Gastrocnemius medialis (tissue), 4 donors: ENCODE measurements at regions of chr1 and their contacts with region 1.

Region 1: GRCh38 chr1:13646521-13646920 is 53.5 kb upstream of the PRDM2 start:
- DNase-seq: no peak
- ATAC-seq: no peak
- H3K4me3 ChIP-seq: no peak overlapping the region
- H3K27ac ChIP-seq: no peak overlapping the region
- H3K4me1 ChIP-seq: no peaks in the 10 kb centered on the region
- H3K27me3 ChIP-seq: no peaks in the 10 kb centered on the region
- CTCF ChIP-seq: no peak
- POLR2A ChIP-seq: no peak

Region 2: DNA sequence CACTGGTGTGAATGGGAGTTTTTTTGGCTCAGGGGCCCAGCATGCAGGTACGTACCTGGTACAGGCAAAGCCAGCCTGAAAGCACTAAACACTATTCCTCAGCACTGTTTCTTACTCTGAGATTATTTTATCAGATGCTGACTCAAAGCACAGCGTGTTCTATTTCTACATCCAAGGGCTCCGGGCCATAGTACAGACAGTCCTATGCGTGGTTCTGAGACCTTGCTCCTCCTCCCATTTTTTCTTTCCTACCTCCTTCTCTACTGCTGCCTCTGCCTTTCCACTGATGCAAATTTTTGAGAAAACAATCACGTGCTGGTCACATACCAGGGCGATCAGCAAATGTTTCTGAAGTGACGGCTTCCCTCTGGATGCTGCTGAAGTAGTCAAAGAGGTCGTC is 26.6 kb before region 1 on chr1:
- in situ Hi-C with region 1: no loop called
- intact Hi-C with region 1: loop called (anchors 2 kb)
- DNase-seq: peak; percentile 60 to 90
- ATAC-seq: peak; percentile 96 to 97
- H3K4me3 ChIP-seq: no peak overlapping the region
- H3K27ac ChIP-seq: peak overlapping the region; percentile 64 to 90 (median 84)
- H3K4me1 ChIP-seq: peaks cover 8 to 16% of the 10 kb centered on the region in 2 donors
- H3K27me3 ChIP-seq: no peaks in the 10 kb centered on the region
- CTCF ChIP-seq: no peak
- POLR2A ChIP-seq: peak; percentile 6 to 64